Activated T-helper 1 cell treated with anti-CD3 and anti-CD28 coated beads, Interleukin-12 subunit alpha, Interleukin-12 subunit beta, Interleukin-2, Interleukin-4 antibody, amounts not matched to agents 30 ng/mL and 10 ng/mL and 1 ng/mL, durations not matched to agents 14 hours and 24 hours and 36 hours (primary cell): ENCODE measurements at regions of chr10 and their contacts with region 1.

Region 1: DNA sequence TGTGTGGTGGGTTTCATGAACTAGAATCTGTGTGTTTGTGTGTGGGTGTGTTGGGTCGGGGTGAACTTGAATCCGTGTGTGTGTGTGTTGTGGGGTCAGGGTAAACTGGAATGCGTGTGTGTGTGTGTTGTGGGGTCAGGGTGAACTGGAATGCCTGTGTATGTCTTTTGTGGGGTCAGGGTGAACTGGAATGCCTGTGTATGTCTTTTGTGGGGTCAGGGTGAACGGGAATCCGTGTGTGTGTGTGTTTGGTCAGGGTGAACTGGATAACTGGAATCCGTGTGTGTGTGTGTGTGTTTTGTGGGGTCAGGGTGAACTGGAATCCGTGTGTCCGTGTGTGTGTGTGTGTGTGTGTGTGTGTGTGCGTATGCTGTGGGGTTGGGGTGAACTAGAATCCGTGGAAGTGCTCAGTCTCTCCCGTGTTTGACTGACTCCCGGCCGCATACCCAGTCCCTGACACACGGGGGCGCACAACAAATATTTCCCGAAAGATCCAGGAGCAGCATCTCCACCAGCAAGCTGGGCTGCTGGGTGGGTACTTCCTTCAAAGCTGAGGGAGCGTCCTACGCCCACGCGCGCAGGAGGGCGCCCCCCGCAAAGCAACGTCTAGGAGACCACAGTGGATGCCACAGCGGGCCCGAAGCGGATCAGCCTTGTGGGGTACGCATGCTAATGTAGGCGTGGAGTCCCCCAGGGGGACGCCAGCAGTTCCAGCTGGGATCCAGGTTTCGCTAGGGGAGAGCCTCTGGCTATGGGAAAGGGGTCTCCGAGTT is 836 bp upstream of the CASP7 start:
- DNase-seq: peak; percentile 66
- H3K4me3 Mint-ChIP-seq: peak overlapping the region; percentile 99
- H3K27ac Mint-ChIP-seq: peak overlapping the region; percentile 98
- H3K4me1 Mint-ChIP-seq: peaks cover 44% of the 10 kb centered on the region
- H3K27me3 Mint-ChIP-seq: peaks cover 9% of the 10 kb centered on the region

Region 2: GRCh38 chr10:112394475-112394875 is 1284.4 kb before region 1 on chr10:
- intact Hi-C with region 1: loop called (anchors 5 kb)
- DNase-seq: no peak
- H3K4me3 Mint-ChIP-seq: peak overlapping the region; percentile 2
- H3K27ac Mint-ChIP-seq: no peak overlapping the region
- H3K4me1 Mint-ChIP-seq: peaks cover 29% of the 10 kb centered on the region
- H3K27me3 Mint-ChIP-seq: no peaks in the 10 kb centered on the region

Region 3: GRCh38 chr10:113689057-113689456 is 10.2 kb after region 1 on chr10:
- intact Hi-C with region 1: loop called (anchors 1 kb)
- DNase-seq: no peak
- H3K4me3 Mint-ChIP-seq: peak overlapping the region; percentile 64
- H3K27ac Mint-ChIP-seq: peak overlapping the region; percentile 70
- H3K4me1 Mint-ChIP-seq: peaks cover 43% of the 10 kb centered on the region
- H3K27me3 Mint-ChIP-seq: no peaks in the 10 kb centered on the region

Region 4: DNA sequence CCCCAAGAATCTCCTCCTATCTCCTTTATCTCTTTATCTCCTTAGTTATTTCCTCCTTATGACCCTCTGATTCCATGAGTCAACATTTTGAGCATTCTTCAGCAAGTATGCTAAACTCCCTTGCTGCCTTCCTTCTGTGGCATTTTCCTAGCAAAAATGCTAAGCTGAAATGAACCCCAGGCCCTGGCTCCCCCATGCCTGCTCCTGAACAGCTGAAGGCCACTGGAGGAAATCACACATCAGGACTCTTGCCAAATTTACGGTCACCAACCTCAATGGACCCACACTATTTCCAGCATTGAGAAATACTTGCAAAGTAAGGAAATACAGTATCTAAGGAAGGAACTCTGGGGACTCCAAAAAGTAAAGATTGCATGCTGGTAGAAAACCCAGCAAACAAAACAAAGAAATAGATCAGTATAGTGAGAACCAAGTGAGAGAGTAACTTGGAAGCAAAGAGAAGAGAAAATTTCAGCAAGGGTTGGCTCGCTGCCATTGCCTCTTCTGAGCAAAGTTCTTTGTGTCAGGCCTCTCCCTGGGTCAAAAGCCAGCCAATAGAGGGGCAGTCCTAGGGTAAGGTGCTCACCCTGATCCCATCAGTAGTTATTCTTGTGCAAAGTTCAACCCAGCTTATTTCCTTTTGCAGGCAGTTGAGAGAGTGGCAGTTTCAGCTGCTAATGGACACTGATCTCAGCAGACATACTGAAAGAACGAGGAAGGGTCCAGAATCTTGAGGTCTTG is 67.5 kb after region 1 on chr10:
- intact Hi-C with region 1: no loop called
- DNase-seq: no peak
- H3K4me3 Mint-ChIP-seq: no peak overlapping the region
- H3K27ac Mint-ChIP-seq: no peak overlapping the region
- H3K4me1 Mint-ChIP-seq: no peaks in the 10 kb centered on the region
- H3K27me3 Mint-ChIP-seq: peaks cover 20% of the 10 kb centered on the region

Region 5: GRCh38 chr10:113958631-113959382 is 279.9 kb after region 1 on chr10:
- intact Hi-C with region 1: loop called (anchors 2 kb)
- DNase-seq: no peak
- H3K4me3 Mint-ChIP-seq: no peak overlapping the region
- H3K27ac Mint-ChIP-seq: no peak overlapping the region
- H3K4me1 Mint-ChIP-seq: peaks cover 39% of the 10 kb centered on the region
- H3K27me3 Mint-ChIP-seq: peaks cover 18% of the 10 kb centered on the region

Region 6: DNA sequence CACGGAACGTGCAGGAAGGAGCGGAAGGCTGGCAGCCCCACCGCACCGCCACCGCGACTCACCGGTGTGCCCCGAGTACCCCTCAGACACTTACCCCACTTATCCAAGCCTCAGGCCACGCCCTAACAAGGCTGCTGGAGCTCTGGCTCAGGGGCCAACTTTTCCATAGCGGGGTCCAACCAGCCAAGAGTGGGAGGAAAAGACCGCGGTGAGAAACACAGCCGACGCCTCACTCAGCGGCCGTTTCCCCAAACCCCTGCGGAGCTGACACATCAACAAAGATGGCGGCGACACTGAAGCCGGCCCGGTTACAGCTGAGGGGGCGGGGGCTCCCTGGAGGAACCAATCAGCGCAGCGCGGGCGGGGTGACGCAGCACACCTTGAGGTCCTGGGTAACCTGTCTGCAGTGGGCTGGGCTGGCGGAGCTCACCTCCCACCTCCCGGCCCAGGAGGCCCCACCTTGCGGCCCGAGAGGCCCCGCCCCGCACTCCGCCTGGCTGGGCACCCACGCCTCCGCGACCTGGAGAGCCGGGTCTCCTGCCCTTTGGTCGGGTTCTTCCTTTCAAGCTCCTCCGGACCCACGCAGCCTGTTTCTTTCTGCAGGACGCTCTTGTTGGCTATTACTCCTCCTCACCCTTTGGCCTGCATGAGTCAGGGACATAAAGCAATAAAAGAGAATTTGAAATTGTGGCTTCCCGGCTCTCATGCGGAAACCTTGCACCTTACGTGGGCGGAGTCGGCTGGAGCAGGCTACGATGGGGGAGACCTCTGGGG is 495.2 kb after region 1 on chr10 and contains the start of gene CCDC186:
- intact Hi-C with region 1: loop called (anchors 1 kb)
- DNase-seq: peak; percentile 96
- H3K4me3 Mint-ChIP-seq: peak within 1 kb of the TSS; percentile 95
- H3K27ac Mint-ChIP-seq: peak within 1 kb of the TSS; percentile 91
- H3K4me1 Mint-ChIP-seq: peaks cover 35% of the 10 kb centered on the region
- H3K27me3 Mint-ChIP-seq: peaks cover 12% of the 10 kb centered on the region
- total RNA-seq, gene CCDC186: 12.1 and 13.0 TPM in 2 replicates

Region 7: GRCh38 chr10:114821293-114821914 is 1142.5 kb after region 1 on chr10 and contains the start of gene FHIP2A:
- intact Hi-C with region 1: loop called (anchors 1 kb)
- DNase-seq: peak; percentile 82
- H3K4me3 Mint-ChIP-seq: peak within 1 kb of the TSS; percentile 94
- H3K27ac Mint-ChIP-seq: peak within 1 kb of the TSS; percentile 93
- H3K4me1 Mint-ChIP-seq: peaks cover 33% of the 10 kb centered on the region
- H3K27me3 Mint-ChIP-seq: peaks cover 8% of the 10 kb centered on the region
- total RNA-seq, gene FHIP2A: 25.0 and 29.0 TPM in 2 replicates